ENCODE measurements at regions of chr19 and their contacts with region 1.

Region 1: DNA sequence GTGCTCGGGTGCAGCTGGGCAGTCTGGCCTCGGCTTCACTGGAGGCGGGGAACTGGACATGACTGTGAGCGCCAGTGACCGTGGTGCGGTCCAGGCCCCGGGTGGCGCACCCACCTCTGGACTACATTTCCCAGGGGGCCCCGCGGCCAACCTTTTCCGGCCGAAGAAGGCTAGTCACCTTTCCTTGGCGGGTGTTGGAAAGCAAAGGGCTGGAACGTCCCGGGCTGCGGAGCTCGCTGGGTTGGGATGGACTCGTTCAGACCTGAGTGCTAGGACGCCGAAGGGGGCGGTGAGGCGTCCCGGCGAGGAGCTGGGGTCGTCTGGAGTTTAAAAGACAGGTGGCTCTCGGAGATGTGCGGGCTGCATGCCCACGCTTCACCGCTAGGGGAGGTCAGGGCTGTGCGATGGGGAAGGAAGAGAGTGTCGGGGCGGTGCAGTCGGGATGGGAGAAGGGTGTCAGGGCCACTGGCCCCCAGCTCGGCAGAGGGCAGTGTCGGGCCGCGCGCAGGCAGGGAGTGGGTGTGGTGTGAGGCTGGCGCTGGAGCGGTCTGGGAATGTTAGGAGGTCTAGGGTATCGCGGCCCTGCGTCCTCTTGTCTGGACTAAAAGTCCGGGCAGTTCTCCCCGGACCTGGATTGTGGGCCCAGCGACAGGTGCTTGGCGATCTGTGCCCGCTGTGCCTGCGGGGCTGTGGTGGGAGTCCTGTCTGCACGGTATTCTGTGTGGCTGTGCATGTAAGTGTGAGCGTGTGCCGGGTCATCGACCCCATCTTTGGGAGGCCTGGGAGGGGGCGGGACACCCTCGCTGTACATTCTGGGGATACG is 57.1 kb downstream of the ZNF568 start:
- DNase-seq: peak; percentile 89
- ATAC-seq: peak; percentile 97 to 100 (median 100)
- H3K4me3 ChIP-seq: peak overlapping the region; percentile 48 to 92 (median 74)
- H3K27ac ChIP-seq: peak overlapping the region; percentile 59 to 91 (median 74)
- H3K4me1 ChIP-seq: peaks cover 5 to 19% (median 14%) of the 10 kb centered on the region in 9 donors
- H3K27me3 ChIP-seq: no peaks in the 10 kb centered on the region
- CTCF ChIP-seq: peak; percentile 74 to 98 (median 94)

Region 2: DNA sequence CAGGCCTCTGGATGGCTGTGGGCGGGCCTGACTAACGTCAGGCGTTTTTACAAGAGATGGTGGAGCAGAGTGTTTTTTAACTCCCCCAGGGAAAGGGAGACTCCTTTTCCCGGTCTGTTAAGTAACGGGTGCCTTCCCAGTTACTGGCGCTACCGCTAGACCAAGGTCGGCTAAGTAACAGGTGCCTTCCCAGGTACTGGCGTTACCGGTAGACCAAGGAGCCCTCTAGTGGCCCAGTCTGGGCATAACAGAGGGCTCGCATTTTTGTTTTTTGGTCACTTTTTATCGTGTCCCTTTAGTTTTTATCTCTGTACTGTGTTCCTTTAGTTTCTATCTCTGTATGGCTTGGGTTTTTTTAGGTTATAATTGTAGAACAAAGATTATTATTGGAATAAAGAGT is 254.8 kb after region 1 on chr19:
- intact Hi-C with region 1: loop called in 1 of 10 experiments (anchors 10 kb)
- DNase-seq: no peak
- ATAC-seq: no peak
- H3K4me3 ChIP-seq: no peak overlapping the region
- H3K27ac ChIP-seq: no peak overlapping the region
- H3K4me1 ChIP-seq: peaks cover 0 to 6% (median 0%) of the 10 kb centered on the region in 9 donors
- H3K27me3 ChIP-seq: no peaks in the 10 kb centered on the region
- CTCF ChIP-seq: peak in 8 of 9 donors; percentile 35 to 66 (median 56)

Region 3: GRCh38 chr19:37309834-37310575 is 336.8 kb after region 1 on chr19:
- intact Hi-C with region 1: loop called in 1 of 10 experiments (anchors 10 kb)
- DNase-seq: no peak
- ATAC-seq: no peak
- H3K4me3 ChIP-seq: no peak overlapping the region
- H3K27ac ChIP-seq: no peak overlapping the region
- H3K4me1 ChIP-seq: peaks cover 0 to 11% (median 5%) of the 10 kb centered on the region in 9 donors
- H3K27me3 ChIP-seq: no peaks in the 10 kb centered on the region
- CTCF ChIP-seq: peak in 1 of 9 donors; percentile 11

Region 4: DNA sequence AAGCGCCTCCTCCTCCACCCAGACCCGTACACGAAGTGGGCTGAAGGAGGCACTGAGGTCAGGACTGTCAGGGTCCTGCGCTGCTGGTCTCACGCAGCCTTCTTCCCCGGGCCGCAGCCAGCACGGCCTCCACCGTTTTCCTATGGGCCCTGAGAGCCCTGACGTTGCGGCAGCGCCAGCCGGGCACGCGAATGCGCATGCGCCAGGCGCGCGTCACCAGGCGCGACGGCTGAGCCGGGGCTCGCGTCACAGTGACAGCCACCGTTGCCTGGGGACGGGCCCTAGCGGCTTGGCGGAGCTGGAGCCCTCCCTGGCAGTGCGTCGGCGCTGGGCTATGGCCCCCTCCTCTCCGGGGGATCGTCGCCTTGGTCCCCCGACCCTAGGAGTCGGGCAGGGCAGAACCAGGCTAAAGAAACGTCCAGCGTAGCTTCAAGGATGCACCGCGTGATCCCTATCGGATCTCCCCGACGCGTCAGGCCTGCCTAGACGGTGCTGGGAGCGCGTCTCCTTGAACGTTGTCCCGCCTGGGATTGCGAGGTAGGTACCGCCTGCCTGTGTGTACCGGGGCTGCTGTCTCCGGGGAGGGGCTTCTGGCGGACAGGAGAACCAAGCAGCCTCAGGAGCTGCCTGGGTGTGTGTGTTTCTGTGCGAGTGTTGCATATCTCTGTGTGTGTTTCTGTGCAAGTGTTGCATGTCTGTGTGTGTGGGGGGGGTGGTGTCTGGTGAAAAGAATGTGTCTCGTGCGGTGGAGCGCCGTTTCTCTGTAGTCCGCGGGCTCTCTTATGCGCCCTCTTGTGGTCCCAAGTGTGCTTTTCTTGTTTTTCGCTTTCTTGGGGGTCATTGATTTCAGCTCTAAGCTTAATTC is 578.1 kb after region 1 on chr19:
- intact Hi-C with region 1: loop called in 1 of 10 experiments (anchors 5 kb)
- DNase-seq: peak; percentile 47 to 64
- ATAC-seq: peak; percentile 74 to 97 (median 93)
- H3K4me3 ChIP-seq: peak overlapping the region; percentile 33 to 78 (median 61)
- H3K27ac ChIP-seq: peak overlapping the region in 9 of 10 donors; percentile 39 to 82 (median 67)
- H3K4me1 ChIP-seq: no peaks in the 10 kb centered on the region
- H3K27me3 ChIP-seq: no peaks in the 10 kb centered on the region
- CTCF ChIP-seq: peak in 7 of 9 donors; percentile 28 to 55 (median 41)